Heart right ventricle (tissue), 16 donors: ENCODE measurements at regions of chr11 and their contacts with region 1.

Region 1: DNA sequence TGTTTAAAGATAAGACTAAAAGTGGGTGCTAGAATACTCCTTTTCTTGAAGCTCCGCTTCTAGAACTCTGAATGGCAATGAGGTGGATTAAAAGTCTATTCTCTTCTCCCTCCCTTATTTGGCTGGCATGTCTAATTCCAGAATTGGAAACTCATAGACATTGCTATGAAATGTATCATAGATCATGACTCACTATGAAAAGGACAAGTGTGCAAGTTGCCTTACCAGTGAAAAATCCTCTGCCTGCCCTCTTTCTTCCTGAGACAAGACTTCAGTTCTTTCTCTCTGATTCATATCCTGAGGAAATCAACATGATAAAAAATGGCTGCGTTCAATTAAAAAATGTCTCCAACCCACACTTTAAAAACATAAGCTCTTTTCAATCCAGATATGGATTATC is 73.2 kb upstream of the BLID start:
- DNase-seq: no peak
- ATAC-seq: peak; percentile 47 to 89 (median 80)
- H3K4me3 ChIP-seq: no peak overlapping the region
- H3K27ac ChIP-seq: peak overlapping the region in 8 of 10 donors; percentile 30 to 70 (median 54)
- H3K4me1 ChIP-seq: peaks cover 0 to 19% (median 7%) of the 10 kb centered on the region in 9 donors
- H3K27me3 ChIP-seq: no peaks in the 10 kb centered on the region
- CTCF ChIP-seq: no peak

Region 2: DNA sequence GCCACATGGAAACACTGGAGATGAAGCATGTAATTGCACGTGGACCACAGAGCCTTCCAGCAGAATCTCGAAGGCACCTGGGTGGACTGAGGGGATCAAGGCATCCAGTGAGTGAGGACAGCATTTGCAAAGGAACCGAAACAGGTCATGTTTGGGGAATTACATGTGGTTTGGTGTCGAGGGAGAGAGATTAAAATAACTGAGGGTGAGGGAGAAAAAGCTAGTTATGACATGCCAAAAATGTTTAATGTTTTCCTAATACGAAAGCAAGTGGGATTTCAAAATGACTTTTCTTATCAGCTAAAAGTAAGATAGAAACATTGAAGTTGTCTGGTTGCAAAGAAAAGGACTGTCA is 230.3 kb before region 1 on chr11:
- intact Hi-C with region 1: no loop called
- DNase-seq: no peak
- ATAC-seq: no peak
- H3K4me3 ChIP-seq: no peak overlapping the region
- H3K27ac ChIP-seq: no peak overlapping the region
- H3K4me1 ChIP-seq: peaks cover 0 to 3% (median 0%) of the 10 kb centered on the region in 9 donors
- H3K27me3 ChIP-seq: no peaks in the 10 kb centered on the region
- CTCF ChIP-seq: no peak

Region 3: GRCh38 chr11:122126024-122126688 is 63.1 kb before region 1 on chr11:
- intact Hi-C with region 1: loop called in 1 of 10 experiments (anchors 10 kb)
- DNase-seq: no peak
- ATAC-seq: no peak
- H3K4me3 ChIP-seq: no peak overlapping the region
- H3K27ac ChIP-seq: no peak overlapping the region
- H3K4me1 ChIP-seq: no peaks in the 10 kb centered on the region
- H3K27me3 ChIP-seq: no peaks in the 10 kb centered on the region
- CTCF ChIP-seq: no peak

Region 4: DNA sequence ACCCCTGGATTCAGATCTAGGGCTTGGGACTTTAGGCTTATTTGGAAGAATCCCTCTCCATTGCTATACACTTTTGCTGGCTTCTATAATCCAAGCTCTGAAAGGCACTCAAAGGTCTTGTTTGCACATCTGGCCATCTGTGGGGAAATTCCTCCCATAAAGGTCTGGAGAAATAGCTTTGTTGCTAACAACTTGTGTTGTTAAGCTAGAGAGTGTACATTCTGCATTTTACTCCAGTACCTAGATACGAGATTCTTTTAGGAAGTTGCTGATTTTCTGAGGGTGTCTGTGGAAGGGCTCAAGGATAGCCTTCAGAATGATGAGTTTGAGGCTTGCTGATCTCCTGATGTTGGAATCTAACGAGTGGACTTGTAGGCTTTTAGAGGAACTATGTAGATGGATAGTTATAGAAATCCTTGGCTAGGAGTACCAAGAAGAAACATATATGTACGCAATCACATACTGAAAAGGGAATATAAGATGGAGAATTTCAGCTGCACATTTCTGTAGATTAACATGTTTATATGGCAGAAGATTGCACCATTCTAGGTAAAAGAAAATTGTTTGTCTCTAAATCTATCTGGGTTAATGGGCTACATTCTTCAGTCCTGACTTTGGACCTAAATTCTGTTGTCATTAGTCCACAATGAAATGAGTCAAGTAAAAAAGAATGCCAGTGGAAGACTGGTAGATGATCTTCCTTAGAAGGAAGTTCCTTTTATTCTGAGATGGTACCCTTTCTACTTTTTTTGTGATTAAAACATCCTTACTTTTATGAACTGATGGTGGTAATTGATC is 517.3 kb after region 1 on chr11:
- intact Hi-C with region 1: no loop called
- DNase-seq: no peak
- ATAC-seq: no peak
- H3K4me3 ChIP-seq: no peak overlapping the region
- H3K27ac ChIP-seq: no peak overlapping the region
- H3K4me1 ChIP-seq: peaks cover 0 to 19% (median 0%) of the 10 kb centered on the region in 9 donors
- H3K27me3 ChIP-seq: no peaks in the 10 kb centered on the region
- CTCF ChIP-seq: no peak